Activated CD8-positive, alpha-beta T cell treated with anti-CD3 and anti-CD28 coated beads, Interleukin-2, amount 10 ng/mL, durations not matched to agents 7 days and 5 days (primary cell): ENCODE measurements at regions of chr19 and their contacts with region 1.

Region 1: GRCh38 chr19:12777217-12778016 is 2.1 kb upstream of the HOOK2 start:
- DNase-seq: peak; percentile 85
- ATAC-seq: peak; percentile 48
- H3K4me3 Mint-ChIP-seq: peak overlapping the region; percentile 72
- H3K27ac Mint-ChIP-seq: peak overlapping the region; percentile 85
- H3K4me1 Mint-ChIP-seq: peaks cover 48% of the 10 kb centered on the region
- H3K27me3 Mint-ChIP-seq: no peaks in the 10 kb centered on the region

Region 2: GRCh38 chr19:12696366-12697335 is 80.8 kb before region 1 on chr19 and contains the start of gene FBXW9:
- CTCF ChIA-PET with region 1: no interaction called
- POLR2A ChIA-PET with region 1: no interaction called
- DNase-seq: peak; percentile 98
- ATAC-seq: peak; percentile 90
- H3K4me3 Mint-ChIP-seq: peak within 1 kb of the TSS; percentile 89
- H3K27ac Mint-ChIP-seq: peak within 1 kb of the TSS; percentile 98
- H3K4me1 Mint-ChIP-seq: peaks cover 26% of the 10 kb centered on the region
- H3K27me3 Mint-ChIP-seq: no peaks in the 10 kb centered on the region
- total RNA-seq, gene FBXW9: 6.0 to 6.1 TPM

Region 3: DNA sequence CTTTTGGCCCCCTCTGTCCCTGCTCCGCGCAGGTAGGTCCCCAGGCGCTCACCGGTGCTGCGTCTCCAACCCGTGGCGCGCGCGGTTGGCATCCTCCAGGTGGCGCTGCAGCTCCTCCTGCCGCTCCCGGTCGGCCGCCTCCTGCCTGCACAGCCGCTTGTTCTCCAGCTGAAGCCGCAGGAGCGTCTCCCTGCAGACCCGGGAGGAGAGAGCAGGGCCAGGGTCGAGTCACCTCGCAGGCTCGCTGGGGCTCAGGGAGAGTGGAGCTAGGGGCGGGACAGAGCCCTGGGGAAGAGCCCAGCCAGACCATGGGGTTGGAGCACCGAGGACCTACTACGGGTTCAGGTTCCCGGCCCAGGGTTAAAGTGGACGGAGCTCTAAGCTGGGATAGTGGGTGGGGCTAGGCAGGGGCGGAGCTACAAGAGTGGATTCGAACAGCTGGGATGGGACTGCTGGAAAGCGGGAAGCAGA is 11.3 kb before region 1 on chr19:
- CTCF ChIA-PET with region 1: interaction called, 19 read pairs
- POLR2A ChIA-PET with region 1: interaction called, 3 read pairs
- DNase-seq: peak; percentile 78
- ATAC-seq: peak; percentile 83
- H3K4me3 Mint-ChIP-seq: no peak overlapping the region
- H3K27ac Mint-ChIP-seq: no peak overlapping the region
- H3K4me1 Mint-ChIP-seq: peaks cover 12% of the 10 kb centered on the region
- H3K27me3 Mint-ChIP-seq: no peaks in the 10 kb centered on the region

Region 4: DNA sequence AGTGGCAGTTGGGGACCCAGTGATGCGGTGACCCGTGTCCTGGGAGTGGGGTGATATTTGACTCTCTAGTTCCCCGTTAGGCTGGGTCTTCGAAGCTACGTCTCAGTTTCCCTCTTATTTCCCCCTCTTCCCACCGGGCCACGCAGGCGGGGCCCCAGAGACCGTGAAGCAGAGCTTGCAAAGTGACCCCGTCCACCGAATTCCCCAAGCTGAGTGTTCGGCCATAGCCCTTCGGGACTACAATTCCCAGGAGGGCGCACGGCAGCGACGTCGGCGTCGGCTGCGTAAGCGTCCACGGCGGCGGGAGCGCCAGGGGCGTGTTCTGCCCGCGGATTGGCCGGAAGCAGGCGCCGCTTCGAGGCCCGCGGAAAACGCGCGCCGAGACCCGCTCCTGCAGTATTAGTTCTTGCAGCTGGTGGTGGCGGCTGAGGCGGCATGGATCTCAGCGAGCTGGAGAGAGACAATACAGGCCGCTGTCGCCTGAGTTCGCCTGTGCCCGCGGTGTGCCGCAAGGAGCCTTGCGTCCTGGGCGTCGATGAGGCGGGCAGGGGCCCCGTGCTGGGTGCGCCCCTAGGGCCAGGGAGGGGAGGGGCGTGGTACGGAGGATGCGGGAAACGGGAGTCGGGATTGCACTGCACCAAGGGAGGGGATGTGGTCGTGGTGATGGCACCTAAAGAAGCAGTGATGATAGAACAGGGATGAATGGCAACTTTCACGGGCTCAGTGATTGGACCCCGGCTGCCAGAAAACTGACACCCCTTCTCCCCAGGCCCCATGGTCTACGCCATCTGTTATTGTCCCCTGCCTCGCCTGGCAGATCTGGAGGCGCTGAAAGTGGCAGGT is 29.0 kb after region 1 on chr19 and contains the start of gene RNASEH2A:
- CTCF ChIA-PET with region 1: interaction called, 15 read pairs
- POLR2A ChIA-PET with region 1: no interaction called
- DNase-seq: peak; percentile 92
- ATAC-seq: peak; percentile 89
- H3K4me3 Mint-ChIP-seq: peak within 1 kb of the TSS; percentile 97
- H3K27ac Mint-ChIP-seq: peak within 1 kb of the TSS; percentile 95
- H3K4me1 Mint-ChIP-seq: peaks cover 28% of the 10 kb centered on the region
- H3K27me3 Mint-ChIP-seq: no peaks in the 10 kb centered on the region
- total RNA-seq, gene RNASEH2A: 49.2 to 64.0 TPM

Region 5: GRCh38 chr19:12881172-12881808 is 103.9 kb after region 1 on chr19 and contains the start of gene DNASE2:
- CTCF ChIA-PET with region 1: no interaction called
- POLR2A ChIA-PET with region 1: no interaction called
- DNase-seq: peak; percentile 95
- ATAC-seq: peak; percentile 79
- H3K4me3 Mint-ChIP-seq: peak within 1 kb of the TSS; percentile 81
- H3K27ac Mint-ChIP-seq: peak within 1 kb of the TSS; percentile 87
- H3K4me1 Mint-ChIP-seq: peaks cover 33% of the 10 kb centered on the region
- H3K27me3 Mint-ChIP-seq: no peaks in the 10 kb centered on the region
- total RNA-seq, gene DNASE2: 26.1 to 27.4 TPM